ENCODE measurements at regions of chr11 and their contacts with region 1.

Region 1: GRCh38 chr11:32615422-32615821 is 31.8 kb downstream of the EIF3M start:
- DNase-seq: peak; percentile 28
- ATAC-seq: no peak
- H3K4me3 ChIP-seq: no peak overlapping the region
- H3K27ac ChIP-seq: no peak overlapping the region
- H3K4me1 ChIP-seq: no peaks in the 10 kb centered on the region
- H3K27me3 ChIP-seq: no peaks in the 10 kb centered on the region
- CTCF ChIP-seq: peak; percentile 51; the same call in 1 of the 2 replicates

Region 2: GRCh38 chr11:32323814-32324130 is 291.6 kb before region 1 on chr11:
- CTCF ChIA-PET with region 1: no interaction called
- POLR2A ChIA-PET with region 1: no interaction called
- intact Hi-C with region 1: loop called (anchors 2 kb)
- DNase-seq: no peak
- ATAC-seq: no peak
- H3K4me3 ChIP-seq: no peak overlapping the region
- H3K27ac ChIP-seq: no peak overlapping the region
- H3K4me1 ChIP-seq: peaks cover 7% of the 10 kb centered on the region
- H3K27me3 ChIP-seq: no peaks in the 10 kb centered on the region
- CTCF ChIP-seq: no peak

Region 3: GRCh38 chr11:32385998-32386397 is 229.4 kb before region 1 on chr11:
- CTCF ChIA-PET with region 1: interaction called, 3 read pairs
- POLR2A ChIA-PET with region 1: no interaction called
- intact Hi-C with region 1: loop called (anchors 1 kb)
- DNase-seq: peak; percentile 64
- ATAC-seq: peak; percentile 97
- H3K4me3 ChIP-seq: no peak overlapping the region
- H3K27ac ChIP-seq: no peak overlapping the region
- H3K4me1 ChIP-seq: 0 out of 2 replicates have a peak, but pooled peaks cover 4% of the 10 kb centered on the region
- H3K27me3 ChIP-seq: no peaks in the 10 kb centered on the region
- CTCF ChIP-seq: peak; percentile 69

Region 4: GRCh38 chr11:32448232-32448631 is 167.2 kb before region 1 on chr11:
- CTCF ChIA-PET with region 1: no interaction called
- POLR2A ChIA-PET with region 1: no interaction called
- intact Hi-C with region 1: loop called (anchors 1 kb)
- DNase-seq: peak; percentile 74
- ATAC-seq: peak; percentile 85
- H3K4me3 ChIP-seq: no peak overlapping the region
- H3K27ac ChIP-seq: no peak overlapping the region
- H3K4me1 ChIP-seq: 0 out of 2 replicates have a peak, but pooled peaks cover 4% of the 10 kb centered on the region
- H3K27me3 ChIP-seq: no peaks in the 10 kb centered on the region
- CTCF ChIP-seq: peak; percentile 75

Region 5: GRCh38 chr11:32706949-32707736 is 91.7 kb after region 1 on chr11:
- CTCF ChIA-PET with region 1: no interaction called
- POLR2A ChIA-PET with region 1: no interaction called
- intact Hi-C with region 1: loop called (anchors 10 kb)
- DNase-seq: peak; percentile 85
- ATAC-seq: peak; percentile 92
- H3K4me3 ChIP-seq: peak overlapping the region; percentile 53
- H3K27ac ChIP-seq: peak overlapping the region; percentile 98
- H3K4me1 ChIP-seq: peaks cover 36% of the 10 kb centered on the region
- H3K27me3 ChIP-seq: no peaks in the 10 kb centered on the region
- CTCF ChIP-seq: no peak

Measured in PC-3 (cell line).